ENCODE measurements at regions of chr14 and their contacts with region 1.

Region 1: GRCh38 chr14:50667996-50668825 is at the start of gene SAV1:
- DNase-seq: peak; percentile 65
- H3K4me3 Mint-ChIP-seq: no peak within 1 kb of the TSS
- H3K27ac Mint-ChIP-seq: peak within 1 kb of the TSS; percentile 56
- H3K4me1 Mint-ChIP-seq: peaks cover 14% of the 10 kb centered on the region
- H3K27me3 Mint-ChIP-seq: no peaks in the 10 kb centered on the region
- total RNA-seq, gene SAV1: 12.7 to 13.5 TPM

Region 2: DNA sequence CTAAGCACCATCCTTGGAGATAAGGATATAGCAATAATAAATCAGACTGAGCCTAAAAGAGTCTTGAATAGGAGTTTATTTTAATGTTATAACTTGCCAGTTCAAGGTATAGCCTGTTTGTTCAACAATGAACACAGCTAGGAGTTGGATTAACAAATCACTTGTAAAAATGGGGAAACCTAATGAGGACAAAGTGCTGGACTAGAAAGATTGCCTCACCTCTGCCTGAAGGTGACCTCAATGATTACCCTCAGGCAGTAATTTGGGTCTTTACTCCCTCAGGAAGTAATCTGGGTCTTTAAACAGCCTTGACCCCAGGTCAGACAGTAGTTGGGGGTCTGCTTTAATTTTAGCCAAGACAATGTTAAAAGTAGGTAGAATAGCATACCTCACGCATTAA is 236.1 kb before region 1 on chr14:
- CTCF ChIA-PET with region 1: no interaction called
- intact Hi-C with region 1: no loop called
- DNase-seq: no peak
- H3K4me3 Mint-ChIP-seq: no peak overlapping the region
- H3K27ac Mint-ChIP-seq: no peak overlapping the region
- H3K4me1 Mint-ChIP-seq: no peaks in the 10 kb centered on the region
- H3K27me3 Mint-ChIP-seq: no peaks in the 10 kb centered on the region

Region 3: GRCh38 chr14:50532502-50533240 is 135.5 kb before region 1 on chr14 and contains the start of gene MAP4K5:
- CTCF ChIA-PET with region 1: no interaction called
- intact Hi-C with region 1: loop called (anchors 5 kb)
- DNase-seq: peak; percentile 89
- H3K4me3 Mint-ChIP-seq: peak within 1 kb of the TSS; percentile 85
- H3K27ac Mint-ChIP-seq: peak within 1 kb of the TSS; percentile 72
- H3K4me1 Mint-ChIP-seq: peaks cover 45% of the 10 kb centered on the region
- H3K27me3 Mint-ChIP-seq: no peaks in the 10 kb centered on the region
- total RNA-seq, gene MAP4K5: 10.2 to 11.2 TPM

Region 4: GRCh38 chr14:50762001-50762930 is 94.1 kb after region 1 on chr14:
- CTCF ChIA-PET with region 1: interaction called, 4 read pairs
- intact Hi-C with region 1: loop called (anchors 2 kb)
- DNase-seq: peak; percentile 74
- H3K4me3 Mint-ChIP-seq: no peak overlapping the region
- H3K27ac Mint-ChIP-seq: no peak overlapping the region
- H3K4me1 Mint-ChIP-seq: peaks cover 28% of the 10 kb centered on the region
- H3K27me3 Mint-ChIP-seq: no peaks in the 10 kb centered on the region

Region 5: DNA sequence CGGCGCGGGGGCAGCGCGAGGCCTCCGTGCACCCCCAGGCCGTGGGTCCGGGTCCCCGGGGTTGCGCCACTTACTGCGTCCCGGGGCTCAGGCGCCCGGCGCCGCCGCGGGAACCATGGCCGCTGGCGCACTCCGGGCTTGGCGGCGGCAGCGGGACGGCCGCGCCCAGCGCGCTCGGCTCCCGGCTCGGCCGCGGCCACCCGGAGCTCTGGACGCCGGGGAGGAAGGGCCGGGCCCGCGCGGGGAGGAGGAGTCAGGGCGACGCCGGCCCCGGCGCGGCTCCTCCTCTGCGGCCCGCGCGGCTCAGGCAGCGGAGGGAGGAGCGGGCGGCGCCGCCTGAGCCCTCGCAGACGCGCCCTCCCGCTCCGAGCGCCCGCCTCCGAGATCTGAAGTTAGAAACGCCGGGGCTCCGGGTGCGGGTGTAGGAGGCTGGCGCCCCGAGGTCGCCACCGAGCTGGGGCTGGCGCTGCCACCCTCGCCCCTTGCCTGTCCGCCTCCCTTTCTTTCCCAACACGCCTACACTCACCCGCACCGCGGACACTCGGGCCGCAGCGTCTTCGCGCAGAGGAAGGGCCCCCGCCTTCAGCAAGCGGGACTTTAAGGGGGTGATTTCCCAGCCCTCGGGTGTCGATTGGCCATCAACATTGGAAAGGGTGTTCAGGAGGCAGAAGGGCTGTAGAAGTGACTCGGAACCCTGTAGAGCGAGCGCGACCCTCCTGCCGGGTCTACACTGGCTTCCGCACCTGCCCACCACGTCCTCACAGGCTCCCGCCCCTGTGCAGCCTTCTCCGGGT is 162.9 kb after region 1 on chr14 and contains the start of gene NIN:
- CTCF ChIA-PET with region 1: no interaction called
- intact Hi-C with region 1: loop called (anchors 2 kb)
- DNase-seq: peak; percentile 69
- H3K4me3 Mint-ChIP-seq: peak within 1 kb of the TSS; percentile 88
- H3K27ac Mint-ChIP-seq: peak within 1 kb of the TSS; percentile 83
- H3K4me1 Mint-ChIP-seq: peaks cover 62% of the 10 kb centered on the region
- H3K27me3 Mint-ChIP-seq: no peaks in the 10 kb centered on the region
- total RNA-seq, gene NIN: 56.9 to 57.9 TPM

Measured in activated naive CD4-positive, alpha-beta T cell treated with anti-CD3 and anti-CD28 coated beads for 36 hours (primary cell).